GM12878 (cell line): ENCODE measurements at regions of chr6 and their contacts with region 1.

Region 1: DNA sequence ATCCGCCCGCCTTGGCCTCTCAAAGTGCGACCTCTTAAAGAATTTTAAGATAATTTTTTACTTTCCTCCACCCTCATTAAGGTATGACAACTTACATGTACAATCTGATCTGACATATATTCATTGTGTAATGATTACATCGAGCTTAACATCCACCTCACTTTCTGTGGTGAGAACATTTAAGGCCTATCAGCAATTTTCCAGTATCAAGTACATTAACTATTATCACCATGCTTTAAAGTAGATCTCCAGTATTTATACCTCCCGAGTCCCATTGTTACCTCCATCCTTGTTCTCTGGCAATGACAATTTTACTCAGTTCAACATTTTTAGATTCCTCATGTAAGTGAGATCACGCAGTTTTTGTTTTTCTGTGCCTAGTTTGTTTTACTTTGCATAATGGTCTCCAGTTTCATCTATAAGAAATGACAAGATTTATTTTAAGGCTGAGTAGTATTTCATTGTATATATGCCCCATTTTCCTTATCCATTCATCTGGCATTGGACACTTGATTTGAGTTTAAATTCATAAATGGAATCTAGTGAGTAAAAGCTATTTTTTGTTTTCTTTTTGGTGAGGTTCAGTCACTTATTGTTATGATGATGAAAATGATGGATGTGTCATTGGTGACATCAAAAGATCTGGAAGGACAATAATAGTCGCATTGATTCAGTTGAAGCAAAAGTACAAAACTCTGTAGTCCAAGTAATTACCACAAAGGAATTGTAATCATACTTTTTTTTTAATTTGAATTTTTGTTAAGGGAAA is 87.0 kb downstream of the OR2B2 start:
- DNase-seq: no peak
- ATAC-seq: peak; percentile 7; the same call in 2 of the 3 replicates
- H3K4me3 ChIP-seq: peak overlapping the region; percentile 66
- H3K27ac ChIP-seq: peak overlapping the region; percentile 96
- H3K4me1 ChIP-seq: no peaks in the 10 kb centered on the region
- H3K27me3 ChIP-seq: no peaks in the 10 kb centered on the region
- CTCF ChIP-seq: no peak
- EP300 ChIP-seq: no peak
- POLR2A ChIP-seq: no peak
- RAD21 ChIP-seq: no peak

Region 2: DNA sequence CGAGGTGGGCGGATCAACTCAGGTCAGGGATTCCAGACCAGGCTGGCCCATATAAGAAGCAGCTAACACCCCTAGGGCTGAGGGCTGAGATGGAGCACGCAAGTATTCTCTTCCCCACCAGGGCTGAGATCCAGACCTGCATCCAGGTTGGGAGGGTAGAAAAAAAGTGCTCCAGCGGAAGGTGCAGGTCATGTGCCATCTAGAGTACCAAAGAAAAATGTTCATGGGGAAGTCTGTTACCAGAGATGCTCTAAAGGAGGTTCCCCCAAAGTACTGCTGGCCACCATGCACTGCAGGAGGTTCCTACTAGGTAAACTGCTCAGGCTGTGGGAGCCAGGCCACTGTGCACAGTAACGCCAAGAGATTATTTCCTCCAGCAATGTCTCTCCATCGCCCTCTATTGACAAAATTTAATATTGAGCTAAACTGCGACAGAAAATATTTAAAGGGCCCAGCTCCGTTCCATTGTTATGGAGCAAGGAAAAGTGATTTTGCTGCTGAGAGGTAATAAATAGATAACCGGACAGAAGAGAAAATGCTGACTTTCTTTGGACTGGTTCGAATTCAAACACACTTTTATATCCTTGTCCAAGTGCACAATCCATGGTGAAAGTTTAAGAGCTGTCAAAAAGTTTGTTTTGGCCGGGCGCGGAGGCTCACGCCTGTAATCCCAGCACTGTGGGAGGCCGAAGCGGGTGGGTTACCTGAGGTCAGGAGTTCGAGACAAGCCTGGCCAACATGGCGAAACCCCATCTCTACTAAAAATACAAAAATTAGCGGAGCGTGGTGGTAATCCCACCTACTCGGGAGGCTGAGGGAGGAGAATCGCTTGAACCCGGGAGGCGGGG is 72.9 kb before region 1 on chr6:
- CTCF ChIA-PET with region 1: no interaction called
- POLR2A ChIA-PET with region 1: no interaction called
- RAD21 ChIA-PET with region 1: no interaction called
- SMC1A ChIA-PET with region 1: no interaction called
- in situ Hi-C with region 1: no loop called
- intact Hi-C with region 1: no loop called
- DNase-seq: peak; percentile 68
- ATAC-seq: peak; percentile 76
- H3K4me3 ChIP-seq: peak overlapping the region; percentile 87
- H3K27ac ChIP-seq: peak overlapping the region; percentile 96
- H3K4me1 ChIP-seq: peaks cover 9% of the 10 kb centered on the region; the same call in 1 of the 2 replicates
- H3K27me3 ChIP-seq: no peaks in the 10 kb centered on the region
- CTCF ChIP-seq: peak; percentile 64 to 89 (median 81)
- EP300 ChIP-seq: no peak
- POLR2A ChIP-seq: no peak
- RAD21 ChIP-seq: peak; percentile 84

Region 3: DNA sequence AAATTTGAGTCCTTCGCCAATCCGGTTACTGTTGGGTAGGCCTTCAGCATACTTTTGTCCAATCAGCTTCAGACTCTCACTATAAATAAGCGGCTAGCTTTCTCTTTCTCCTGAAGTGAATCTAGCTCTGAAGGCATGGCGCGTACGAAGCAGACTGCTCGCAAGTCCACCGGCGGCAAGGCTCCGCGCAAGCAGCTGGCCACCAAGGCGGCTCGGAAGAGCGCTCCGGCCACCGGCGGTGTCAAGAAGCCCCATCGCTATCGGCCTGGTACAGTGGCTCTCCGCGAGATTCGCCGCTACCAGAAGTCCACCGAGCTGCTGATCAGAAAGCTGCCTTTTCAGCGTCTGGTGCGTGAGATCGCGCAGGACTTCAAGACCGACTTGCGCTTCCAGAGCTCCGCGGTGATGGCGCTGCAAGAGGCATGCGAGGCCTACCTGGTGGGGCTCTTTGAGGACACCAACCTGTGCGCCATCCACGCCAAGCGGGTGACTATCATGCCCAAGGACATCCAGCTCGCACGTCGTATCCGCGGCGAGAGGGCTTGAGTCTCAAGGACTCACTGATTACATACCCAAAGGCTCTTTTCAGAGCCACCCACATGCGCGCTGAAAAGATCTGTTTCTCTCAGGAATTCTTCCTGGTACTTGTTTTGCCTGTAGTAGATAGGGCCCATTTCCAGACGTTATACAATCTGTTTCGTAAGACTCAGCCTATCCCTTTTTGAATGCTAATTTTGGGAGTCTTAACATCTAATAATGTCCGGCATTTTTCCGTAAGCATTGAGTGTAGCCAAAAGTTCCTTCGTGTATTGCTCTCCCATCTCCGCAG is 15.1 kb before region 1 on chr6:
- CTCF ChIA-PET with region 1: interaction called, 3 read pairs
- POLR2A ChIA-PET with region 1: interaction called, 17 read pairs
- RAD21 ChIA-PET with region 1: interaction called, 6 read pairs
- SMC1A ChIA-PET with region 1: interaction called, 14 read pairs
- in situ Hi-C with region 1: no loop called
- intact Hi-C with region 1: no loop called
- DNase-seq: peak; percentile 98
- ATAC-seq: peak; percentile 43
- H3K4me3 ChIP-seq: peak overlapping the region; percentile 74
- H3K27ac ChIP-seq: peak overlapping the region; percentile 82
- H3K4me1 ChIP-seq: peaks cover 25% of the 10 kb centered on the region
- H3K27me3 ChIP-seq: no peaks in the 10 kb centered on the region
- CTCF ChIP-seq: peak in 1 of 3 experiments; percentile 19; a peak in 2 of 6 replicates
- EP300 ChIP-seq: no peak
- POLR2A ChIP-seq: peak; percentile 95
- RAD21 ChIP-seq: no peak

Region 4: DNA sequence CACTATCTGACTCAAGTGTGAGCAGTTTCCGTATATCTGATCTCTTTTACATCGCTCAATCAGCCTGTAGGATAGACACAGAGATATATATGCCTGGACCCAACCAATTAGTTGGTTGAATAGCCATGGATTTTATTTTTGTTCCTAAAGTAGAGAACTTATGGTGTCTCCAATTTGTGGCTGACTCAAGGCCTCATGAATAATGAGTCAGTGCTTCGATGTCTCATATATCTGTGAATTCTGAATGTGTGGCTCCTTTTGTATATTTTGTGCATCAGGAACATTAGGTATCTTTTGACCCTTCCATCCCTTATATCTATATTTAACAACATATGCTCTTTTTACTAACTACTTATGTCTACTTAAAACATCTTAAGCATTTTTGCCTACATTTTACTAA is 22.5 kb after region 1 on chr6:
- CTCF ChIA-PET with region 1: no interaction called
- POLR2A ChIA-PET with region 1: no interaction called
- RAD21 ChIA-PET with region 1: no interaction called
- SMC1A ChIA-PET with region 1: no interaction called
- in situ Hi-C with region 1: no loop called
- intact Hi-C with region 1: no loop called
- DNase-seq: no peak
- ATAC-seq: no peak
- H3K4me3 ChIP-seq: no peak overlapping the region
- H3K27ac ChIP-seq: no peak overlapping the region
- H3K4me1 ChIP-seq: no peaks in the 10 kb centered on the region
- H3K27me3 ChIP-seq: no peaks in the 10 kb centered on the region
- CTCF ChIP-seq: no peak
- EP300 ChIP-seq: no peak
- POLR2A ChIP-seq: no peak
- RAD21 ChIP-seq: no peak

Region 5: GRCh38 chr6:27871924-27872638 is 46.9 kb after region 1 on chr6:
- CTCF ChIA-PET with region 1: no interaction called
- POLR2A ChIA-PET with region 1: interaction called, 19 read pairs
- RAD21 ChIA-PET with region 1: interaction called, 5 read pairs
- SMC1A ChIA-PET with region 1: interaction called, 4 read pairs
- in situ Hi-C with region 1: no loop called
- intact Hi-C with region 1: no loop called
- DNase-seq: peak; percentile 99
- ATAC-seq: peak; percentile 73
- H3K4me3 ChIP-seq: peak overlapping the region; percentile 69
- H3K27ac ChIP-seq: peak overlapping the region; percentile 97
- H3K4me1 ChIP-seq: peaks cover 20% of the 10 kb centered on the region
- H3K27me3 ChIP-seq: no peaks in the 10 kb centered on the region
- CTCF ChIP-seq: peak; percentile 29 to 44 (median 43); a peak in 5 of 6 replicates
- EP300 ChIP-seq: no peak
- POLR2A ChIP-seq: peak; percentile 97
- RAD21 ChIP-seq: no peak